ENCODE measurements at regions of chr2 and their contacts with region 1.

Region 1: GRCh38 chr2:225620227-225620626 is 220.7 kb downstream of the NYAP2 start:
- DNase-seq: no peak
- CTCF ChIP-seq: no peak

Region 2: GRCh38 chr2:225630824-225631533 is 10.8 kb after region 1 on chr2:
- CTCF ChIA-PET with region 1: interaction called, 10 read pairs
- POLR2A ChIA-PET with region 1: no interaction called
- DNase-seq: no peak
- CTCF ChIP-seq: no peak